ENCODE measurements at regions of chr16 and their contacts with region 1.

Region 1: DNA sequence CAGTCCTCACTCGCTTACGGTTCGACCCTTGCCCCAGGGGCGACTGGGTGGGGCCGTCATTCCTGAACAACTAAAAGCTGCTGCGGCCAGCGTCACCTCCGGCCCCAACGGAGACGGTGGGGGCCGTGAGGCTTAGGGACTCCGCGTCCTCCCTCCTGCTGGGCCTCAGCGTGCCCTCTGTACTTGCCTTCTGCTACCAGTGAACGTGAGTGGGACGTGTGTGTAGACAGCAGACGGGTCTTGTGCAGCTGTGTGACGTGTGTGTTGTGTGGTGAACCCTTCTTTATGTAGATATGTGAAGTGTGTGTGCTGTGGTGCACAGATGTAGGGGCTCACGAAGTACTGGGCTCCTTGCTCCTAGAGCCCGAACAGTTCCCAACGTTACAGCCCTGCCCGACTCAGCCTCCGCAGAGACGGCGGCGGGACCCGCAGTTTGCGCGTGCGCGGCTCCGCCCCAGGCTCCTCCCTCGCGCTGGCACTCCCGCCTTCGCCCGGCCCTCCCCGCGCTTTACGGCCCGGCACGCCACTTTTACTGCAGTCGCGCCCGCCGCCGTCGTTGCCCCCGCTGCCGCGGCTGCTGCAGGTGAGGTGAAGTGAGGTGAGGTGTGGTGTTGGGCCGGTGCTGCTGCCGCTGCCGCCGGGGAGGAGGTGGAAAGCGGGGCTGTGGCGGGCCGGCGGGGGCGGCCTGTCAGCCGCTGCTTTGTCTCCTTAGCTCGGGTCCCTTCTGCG is at the start of gene PHAF1:
- DNase-seq: peak; percentile 95
- H3K4me3 ChIP-seq: peak within 1 kb of the TSS; percentile 87 to 98 (median 90)
- H3K27ac ChIP-seq: peak within 1 kb of the TSS; percentile 77 to 88 (median 82)
- H3K4me1 ChIP-seq: peaks cover 0 to 27% (median 21%) of the 10 kb centered on the region in 4 donors
- H3K27me3 ChIP-seq: no peaks in the 10 kb centered on the region
- CTCF ChIP-seq: no peak
- EP300 ChIP-seq: no peak
- POLR2A ChIP-seq: peak; percentile 58 to 77
- total RNA-seq, gene PHAF1: 11.4 to 16.3 (median 14.0) TPM

Region 2: GRCh38 chr16:67028555-67029248 is 80.9 kb before region 1 on chr16 and contains the start of gene CBFB:
- intact Hi-C with region 1: loop called (anchors 2 kb)
- DNase-seq: peak; percentile 96
- H3K4me3 ChIP-seq: peak within 1 kb of the TSS; percentile 67 to 95 (median 78)
- H3K27ac ChIP-seq: peak within 1 kb of the TSS; percentile 85 to 99 (median 98)
- H3K4me1 ChIP-seq: peaks cover 0 to 26% (median 23%) of the 10 kb centered on the region in 4 donors
- H3K27me3 ChIP-seq: no peaks in the 10 kb centered on the region
- CTCF ChIP-seq: no peak
- EP300 ChIP-seq: no peak
- POLR2A ChIP-seq: peak; percentile 70 to 82
- total RNA-seq, gene CBFB: 21.3 to 28.0 (median 24.8) TPM

Measured in sigmoid colon (tissue), 7 donors.